GM13977 (cell line): ENCODE measurements at regions of chr3 and their contacts with region 1.

Region 1: DNA sequence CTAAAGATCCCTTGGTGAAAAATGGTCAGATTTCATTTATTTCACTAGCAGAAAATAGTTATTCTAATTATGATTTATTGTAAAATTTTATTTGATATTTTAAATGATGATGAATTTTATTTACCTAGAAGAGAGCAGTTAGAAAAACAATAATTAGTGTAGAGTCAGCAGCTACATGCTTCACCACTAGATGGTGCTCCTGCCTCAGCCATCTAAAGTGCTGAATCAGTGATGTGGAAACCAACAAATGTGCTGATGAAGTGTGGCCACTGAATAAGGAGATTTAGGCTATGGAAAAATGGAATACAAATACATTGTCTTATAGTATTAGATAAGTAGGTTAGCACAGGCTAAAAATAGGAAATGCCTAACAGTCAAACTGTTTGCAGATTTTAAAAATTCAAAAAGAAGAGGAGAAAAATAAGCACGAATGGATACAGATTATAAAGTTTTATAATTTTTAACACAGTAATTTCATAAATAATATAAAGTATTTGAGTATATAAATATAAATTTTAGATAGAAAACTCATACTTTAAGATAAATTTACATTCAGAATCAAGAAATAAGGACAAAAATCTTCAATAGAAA is 109.8 kb downstream of the PPP2R3A start:
- DNase-seq: peak; percentile 51
- CTCF ChIP-seq: peak; percentile 89

Region 2: DNA sequence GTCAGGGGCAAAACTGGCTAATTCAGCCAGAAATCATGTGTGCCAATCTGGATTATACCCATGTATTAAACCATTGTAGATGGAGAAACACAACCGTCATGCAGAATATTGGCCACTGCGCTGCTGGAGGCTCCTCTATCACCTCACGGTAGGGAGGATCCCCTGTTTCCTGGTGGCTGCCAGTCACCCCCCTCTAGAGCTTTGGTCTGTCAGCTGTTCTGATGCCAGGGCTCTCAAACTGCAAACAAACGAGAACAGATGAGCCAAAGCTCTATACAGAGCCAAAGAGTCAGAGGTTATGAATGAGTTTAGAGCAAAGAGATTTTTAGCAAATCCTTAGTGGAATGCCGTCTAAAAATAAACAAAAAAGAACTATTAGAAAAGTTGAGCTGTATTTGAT is 945.0 kb after region 1 on chr3:
- in situ Hi-C with region 1: loop called (anchors 10 kb)
- DNase-seq: no peak
- CTCF ChIP-seq: no peak